ENCODE measurements at regions of chr10 and their contacts with region 1.

Region 1: DNA sequence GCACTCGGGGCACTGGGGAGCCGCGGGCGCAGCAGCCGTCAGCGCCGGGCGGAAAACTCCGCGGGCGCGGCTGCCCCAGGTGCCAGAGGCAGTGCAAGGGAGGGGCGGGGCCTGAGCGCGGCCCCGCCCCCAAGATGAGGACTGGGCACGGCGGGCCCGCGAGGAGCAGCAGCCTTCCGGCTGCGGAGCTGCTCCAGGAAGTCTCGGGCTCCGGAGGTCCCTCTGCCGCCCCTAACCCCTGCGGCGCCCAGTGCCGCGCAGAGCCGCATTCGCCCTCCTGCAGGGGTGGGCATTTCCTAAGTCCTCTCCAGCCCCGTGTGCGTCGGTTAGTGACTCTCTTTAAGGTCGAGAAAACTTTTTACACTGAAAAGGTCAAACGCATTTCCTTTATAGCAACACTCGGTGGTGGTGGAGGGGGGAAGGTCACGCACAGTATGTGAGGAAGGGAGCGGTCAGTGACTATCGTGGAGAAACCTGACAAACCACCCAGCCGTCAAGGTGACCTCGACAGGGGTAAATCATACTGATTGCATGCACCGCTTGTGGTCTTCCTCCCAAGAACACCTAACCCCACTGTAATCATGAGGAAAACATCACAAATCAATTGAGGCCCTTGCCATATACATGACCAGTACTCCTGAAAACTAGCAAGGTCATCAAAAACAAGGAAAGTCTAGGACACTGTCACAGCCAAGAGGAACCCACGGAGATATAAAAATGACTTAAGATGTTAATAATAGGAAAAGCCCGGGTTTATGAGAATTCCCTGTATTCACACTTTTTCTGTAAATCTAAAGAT is at the start of gene ANXA11:
- DNase-seq: peak; percentile 86
- ATAC-seq: peak; percentile 80
- H3K4me3 Mint-ChIP-seq: peak within 1 kb of the TSS; percentile 93
- H3K27ac Mint-ChIP-seq: peak within 1 kb of the TSS; percentile 92
- H3K4me1 Mint-ChIP-seq: peaks cover 37% of the 10 kb centered on the region
- H3K27me3 Mint-ChIP-seq: peaks cover 2% of the 10 kb centered on the region
- total RNA-seq, gene ANXA11: 263 to 277 TPM

Region 2: GRCh38 chr10:80144067-80144695 is 61.5 kb before region 1 on chr10:
- POLR2A ChIA-PET with region 1: interaction called, 12 read pairs
- DNase-seq: peak; percentile 59
- ATAC-seq: peak; percentile 62
- H3K4me3 Mint-ChIP-seq: peak overlapping the region; percentile 80
- H3K27ac Mint-ChIP-seq: peak overlapping the region; percentile 70
- H3K4me1 Mint-ChIP-seq: peaks cover 11% of the 10 kb centered on the region
- H3K27me3 Mint-ChIP-seq: peaks cover 2% of the 10 kb centered on the region

Region 3: GRCh38 chr10:80187465-80188409 is 17.9 kb before region 1 on chr10:
- POLR2A ChIA-PET with region 1: interaction called, 77 read pairs
- DNase-seq: peak; percentile 81
- ATAC-seq: peak; percentile 91
- H3K4me3 Mint-ChIP-seq: peak overlapping the region; percentile 74
- H3K27ac Mint-ChIP-seq: peak overlapping the region; percentile 91
- H3K4me1 Mint-ChIP-seq: peaks cover 52% of the 10 kb centered on the region
- H3K27me3 Mint-ChIP-seq: no peaks in the 10 kb centered on the region